HepG2 (cell line): ENCODE measurements at regions of chr7 and their contacts with region 1.

Region 1: DNA sequence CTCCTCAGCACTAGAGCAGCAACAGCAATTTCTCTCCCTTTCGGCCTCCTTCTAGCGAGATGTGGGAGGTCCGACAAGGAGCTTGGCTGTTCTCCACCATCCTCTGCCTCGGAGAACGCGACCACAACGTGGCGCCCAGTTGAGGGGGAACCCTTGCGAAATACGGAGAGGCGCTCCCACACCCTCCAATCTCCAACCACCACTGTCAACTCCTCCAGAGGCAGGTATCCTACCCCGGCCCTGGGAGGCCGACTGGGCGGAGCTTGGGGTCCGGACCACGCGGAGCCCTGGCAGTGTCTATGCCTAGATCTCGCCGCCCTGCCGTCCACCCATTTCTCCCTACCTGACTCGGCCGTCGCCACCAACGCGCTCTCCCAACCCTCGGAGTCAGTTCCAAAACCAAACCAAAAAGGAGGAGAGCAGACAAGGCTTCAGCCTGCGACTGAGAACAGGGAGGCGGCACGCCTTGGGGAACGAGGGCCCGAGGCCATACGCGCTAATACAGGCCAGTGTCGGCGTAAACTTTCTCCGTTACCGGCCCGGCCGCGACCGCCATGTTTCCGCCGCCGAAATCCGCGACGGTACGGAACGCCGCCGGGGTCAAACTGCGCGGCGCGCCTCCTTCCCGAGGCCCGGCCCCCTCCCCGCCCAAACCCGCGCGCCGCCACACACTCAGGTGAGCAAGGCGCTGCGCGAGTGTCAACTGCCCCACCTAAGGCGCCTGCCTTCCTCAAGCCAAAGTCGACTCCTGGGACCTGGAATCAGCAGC is at the start of gene TMEM168:
- DNase-seq: peak; percentile 63
- ATAC-seq: peak; percentile 86
- H3K4me3 ChIP-seq: peak within 1 kb of the TSS; percentile 67 to 78 (median 73)
- H3K27ac ChIP-seq: peak within 1 kb of the TSS; percentile 93
- H3K4me1 ChIP-seq: peaks cover 22% of the 10 kb centered on the region
- H3K27me3 ChIP-seq: peaks cover 0 to 2% of the 10 kb centered on the region in 2 experiments; a peak in 1 of 5 replicates
- CTCF ChIP-seq: peak; percentile 25; the same call in 1 of the 2 replicates
- EP300 ChIP-seq: no peak
- POLR2A ChIP-seq: peak; percentile 50 to 74; a peak in 3 of 4 replicates
- RAD21 ChIP-seq: no peak; the same call in 1 of the 2 replicates
- total RNA-seq, gene TMEM168: 5.7 and 8.7 TPM in 2 replicates

Region 2: DNA sequence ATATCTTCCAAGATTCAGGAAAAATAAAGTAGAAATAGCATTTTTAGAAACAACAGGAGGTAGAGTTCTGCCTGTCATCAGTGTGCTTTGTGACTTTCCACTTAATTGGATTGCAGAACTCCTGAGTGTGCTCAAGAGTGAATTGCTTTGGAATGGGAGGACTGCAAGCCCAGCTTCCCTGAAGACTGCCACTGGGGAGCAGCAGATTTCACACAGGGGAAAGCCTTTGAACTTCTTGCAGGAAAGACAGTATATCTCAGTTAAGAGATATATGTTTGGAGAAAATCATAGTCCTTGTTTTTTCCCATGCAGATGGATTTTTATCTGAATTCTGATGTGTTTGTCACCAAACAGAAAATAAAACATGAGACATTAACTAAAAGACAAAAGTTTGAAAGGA is 124.3 kb before region 1 on chr7:
- CTCF ChIA-PET with region 1: no interaction called
- POLR2A ChIA-PET with region 1: no interaction called
- in situ Hi-C with region 1: no loop called
- intact Hi-C with region 1: no loop called
- DNase-seq: no peak
- ATAC-seq: peak; percentile 53; the same call in 2 of the 3 replicates
- H3K4me3 ChIP-seq: no peak overlapping the region
- H3K27ac ChIP-seq: no peak overlapping the region
- H3K4me1 ChIP-seq: no peaks in the 10 kb centered on the region
- H3K27me3 ChIP-seq: no peaks in the 10 kb centered on the region
- CTCF ChIP-seq: no peak
- EP300 ChIP-seq: no peak
- POLR2A ChIP-seq: no peak
- RAD21 ChIP-seq: no peak

Region 3: DNA sequence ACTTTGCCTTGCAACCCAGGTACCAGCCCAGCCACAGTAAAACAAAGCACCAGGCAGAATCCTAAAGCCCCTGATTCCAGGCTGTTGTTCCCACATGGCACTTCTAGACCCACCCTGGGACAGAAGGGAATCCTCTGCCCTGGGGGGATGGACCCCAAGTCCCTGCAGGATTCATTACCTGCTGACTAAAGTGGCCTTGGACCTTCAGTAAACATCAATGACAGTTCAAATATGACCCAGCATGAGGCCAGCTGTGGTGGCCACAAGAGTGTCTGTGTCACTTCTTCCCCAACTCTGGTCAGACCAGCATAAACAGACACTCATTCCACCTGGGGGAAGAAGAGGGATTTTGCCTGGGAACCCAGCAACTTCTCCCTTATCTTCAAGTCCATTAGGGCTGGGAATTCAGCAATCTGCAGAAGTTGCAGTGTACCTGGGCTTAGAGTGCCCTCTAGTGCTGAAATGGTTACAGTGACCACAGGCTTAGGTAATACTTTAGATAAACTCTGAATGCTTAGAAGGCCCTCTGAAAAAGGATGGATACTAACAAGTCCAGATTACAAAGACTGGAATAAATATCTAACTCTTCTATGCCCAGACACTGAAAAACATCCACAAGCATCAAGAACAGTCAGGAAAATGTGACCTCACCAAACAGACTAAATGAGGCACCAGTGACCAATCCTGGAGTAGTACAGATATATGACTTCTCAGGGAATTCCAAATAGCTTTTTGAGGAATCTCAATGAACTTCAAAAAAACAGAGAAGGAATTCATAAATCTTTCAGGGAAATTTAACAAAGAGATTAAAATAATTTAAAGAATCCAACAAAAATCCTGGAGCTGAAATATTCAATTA is 108.7 kb after region 1 on chr7:
- CTCF ChIA-PET with region 1: no interaction called
- POLR2A ChIA-PET with region 1: no interaction called
- in situ Hi-C with region 1: no loop called
- intact Hi-C with region 1: loop called (anchors 10 kb)
- DNase-seq: peak; percentile 79
- ATAC-seq: peak; percentile 92
- H3K4me3 ChIP-seq: peak overlapping the region in 1 of 3 experiments; percentile 35; a peak in 1 of 6 replicates
- H3K27ac ChIP-seq: peak overlapping the region; percentile 80
- H3K4me1 ChIP-seq: peaks cover 39% of the 10 kb centered on the region
- H3K27me3 ChIP-seq: no peaks in the 10 kb centered on the region
- CTCF ChIP-seq: peak; percentile 82
- EP300 ChIP-seq: 0 out of 4 replicates have a peak, but pooled peaks of 1 of the 2 experiments have one; percentile 21
- POLR2A ChIP-seq: no peak
- RAD21 ChIP-seq: peak; percentile 80